Sigmoid colon (tissue), 7 donors: ENCODE measurements at regions of chr10 and their contacts with region 1.

Region 1: GRCh38 chr10:3472287-3473051 is 299.9 kb upstream of the PITRM1 start:
- DNase-seq: peak; percentile 80
- H3K4me3 ChIP-seq: peak overlapping the region; percentile 6 to 31 (median 27)
- H3K27ac ChIP-seq: peak overlapping the region; percentile 85 to 91 (median 90)
- H3K4me1 ChIP-seq: peaks cover 0 to 56% (median 55%) of the 10 kb centered on the region in 4 donors
- H3K27me3 ChIP-seq: no peaks in the 10 kb centered on the region
- CTCF ChIP-seq: no peak
- EP300 ChIP-seq: peak in 2 of 4 donors; percentile 76 to 88
- POLR2A ChIP-seq: no peak

Region 2: DNA sequence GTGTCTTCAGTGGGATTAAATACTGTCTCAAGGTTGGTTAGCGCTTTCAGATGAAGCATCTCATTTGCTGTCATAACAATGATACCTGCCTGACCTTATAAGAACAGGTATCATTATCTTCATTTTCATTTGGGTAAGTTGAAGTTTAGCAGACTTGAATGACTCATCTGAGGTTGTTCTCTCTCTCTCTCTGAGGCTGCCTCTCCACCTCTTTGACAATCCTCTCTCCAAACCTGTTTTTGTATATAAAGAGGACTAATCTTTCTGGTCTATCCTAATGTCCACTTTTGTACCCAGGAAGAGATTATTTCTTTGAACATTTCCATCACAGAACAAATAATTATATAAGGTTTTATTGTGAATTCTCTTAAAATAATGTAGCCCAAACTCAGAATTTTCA is 21.2 kb after region 1 on chr10:
- intact Hi-C with region 1: loop called (anchors 2 kb)
- DNase-seq: no peak
- H3K4me3 ChIP-seq: peak overlapping the region in 3 of 4 donors; percentile 21 to 32 (median 23)
- H3K27ac ChIP-seq: peak overlapping the region; percentile 25 to 84 (median 72)
- H3K4me1 ChIP-seq: peaks cover 0 to 15% (median 7%) of the 10 kb centered on the region in 4 donors
- H3K27me3 ChIP-seq: no peaks in the 10 kb centered on the region
- CTCF ChIP-seq: no peak
- EP300 ChIP-seq: no peak
- POLR2A ChIP-seq: no peak

Region 3: GRCh38 chr10:4061441-4061951 is 589.0 kb after region 1 on chr10:
- intact Hi-C with region 1: loop called (anchors 5 kb)
- DNase-seq: peak; percentile 91
- H3K4me3 ChIP-seq: no peak overlapping the region
- H3K27ac ChIP-seq: peak overlapping the region; percentile 65 to 83 (median 74)
- H3K4me1 ChIP-seq: peaks cover 0 to 47% (median 44%) of the 10 kb centered on the region in 4 donors
- H3K27me3 ChIP-seq: no peaks in the 10 kb centered on the region
- CTCF ChIP-seq: no peak
- EP300 ChIP-seq: no peak
- POLR2A ChIP-seq: no peak